ENCODE measurements at regions of chr9 and their contacts with region 1.

Region 1: DNA sequence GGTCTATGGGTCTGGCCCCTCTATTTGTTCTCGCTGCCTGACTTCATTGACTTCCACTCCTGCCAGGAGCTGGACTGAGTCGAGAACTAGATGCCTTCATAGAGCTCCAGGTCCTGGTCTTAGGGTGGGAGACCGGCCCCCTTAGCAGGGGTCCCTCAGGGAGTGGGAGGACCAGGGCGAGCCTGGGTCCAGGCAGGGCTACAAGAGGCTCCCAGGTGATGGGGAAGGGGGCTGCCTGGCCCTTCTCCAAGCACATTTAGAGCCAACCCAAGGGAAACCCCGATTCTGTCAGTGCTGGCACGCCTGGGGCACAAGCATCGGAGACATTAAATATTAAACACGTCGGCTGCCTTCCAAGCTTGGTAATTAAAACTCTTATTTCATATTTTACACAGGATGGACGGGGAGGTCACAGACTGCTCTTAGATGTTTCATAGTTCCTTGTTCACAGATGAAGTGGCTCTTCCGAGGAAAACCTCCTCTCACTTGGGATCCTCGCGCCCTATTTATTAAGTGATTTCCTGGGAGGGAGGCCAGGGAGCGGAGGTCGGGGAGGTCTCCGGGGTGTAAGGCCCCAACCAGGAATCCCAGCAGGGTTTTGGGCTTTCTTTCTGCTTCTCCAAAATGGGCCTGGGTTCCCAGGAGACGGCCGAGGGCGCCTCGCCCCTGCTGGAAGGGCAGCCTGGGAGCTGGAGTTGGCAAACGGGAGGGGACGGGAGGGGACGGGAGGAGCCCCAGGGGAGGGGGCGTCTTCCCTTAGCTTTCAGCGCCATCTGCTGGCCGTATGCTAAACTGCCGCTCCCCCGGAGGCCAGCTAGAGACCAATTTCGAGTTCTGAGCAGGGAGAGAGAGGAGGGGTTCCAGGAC is 23.4 kb upstream of the ZBTB43 start:
- DNase-seq: peak; percentile 93
- H3K4me3 ChIP-seq: no peak overlapping the region; a peak in 1 of 4 replicates
- H3K27ac ChIP-seq: no peak overlapping the region
- H3K4me1 ChIP-seq: peaks cover 0 to 2% of the 10 kb centered on the region in 2 experiments; a peak in 1 of 4 replicates
- H3K27me3 ChIP-seq: peaks cover 12% of the 10 kb centered on the region; the same call in 1 of the 2 replicates
- CTCF ChIP-seq: peak; percentile 93
- EP300 ChIP-seq: no peak
- RAD21 ChIP-seq: peak; percentile 96

Region 2: GRCh38 chr9:126146254-126147145 is 634.9 kb before region 1 on chr9:
- CTCF ChIA-PET with region 1: no interaction called
- POLR2A ChIA-PET with region 1: no interaction called
- DNase-seq: peak; percentile 45
- H3K4me3 ChIP-seq: no peak overlapping the region
- H3K27ac ChIP-seq: no peak overlapping the region
- H3K4me1 ChIP-seq: peaks cover 0 to 16% of the 10 kb centered on the region in 2 experiments; a peak in 1 of 4 replicates
- H3K27me3 ChIP-seq: no peaks in the 10 kb centered on the region; the same call in 1 of the 2 replicates
- CTCF ChIP-seq: peak; percentile 23; the same call in 1 of the 2 replicates
- EP300 ChIP-seq: no peak
- RAD21 ChIP-seq: peak; percentile 23; the same call in 1 of the 2 replicates

Region 3: DNA sequence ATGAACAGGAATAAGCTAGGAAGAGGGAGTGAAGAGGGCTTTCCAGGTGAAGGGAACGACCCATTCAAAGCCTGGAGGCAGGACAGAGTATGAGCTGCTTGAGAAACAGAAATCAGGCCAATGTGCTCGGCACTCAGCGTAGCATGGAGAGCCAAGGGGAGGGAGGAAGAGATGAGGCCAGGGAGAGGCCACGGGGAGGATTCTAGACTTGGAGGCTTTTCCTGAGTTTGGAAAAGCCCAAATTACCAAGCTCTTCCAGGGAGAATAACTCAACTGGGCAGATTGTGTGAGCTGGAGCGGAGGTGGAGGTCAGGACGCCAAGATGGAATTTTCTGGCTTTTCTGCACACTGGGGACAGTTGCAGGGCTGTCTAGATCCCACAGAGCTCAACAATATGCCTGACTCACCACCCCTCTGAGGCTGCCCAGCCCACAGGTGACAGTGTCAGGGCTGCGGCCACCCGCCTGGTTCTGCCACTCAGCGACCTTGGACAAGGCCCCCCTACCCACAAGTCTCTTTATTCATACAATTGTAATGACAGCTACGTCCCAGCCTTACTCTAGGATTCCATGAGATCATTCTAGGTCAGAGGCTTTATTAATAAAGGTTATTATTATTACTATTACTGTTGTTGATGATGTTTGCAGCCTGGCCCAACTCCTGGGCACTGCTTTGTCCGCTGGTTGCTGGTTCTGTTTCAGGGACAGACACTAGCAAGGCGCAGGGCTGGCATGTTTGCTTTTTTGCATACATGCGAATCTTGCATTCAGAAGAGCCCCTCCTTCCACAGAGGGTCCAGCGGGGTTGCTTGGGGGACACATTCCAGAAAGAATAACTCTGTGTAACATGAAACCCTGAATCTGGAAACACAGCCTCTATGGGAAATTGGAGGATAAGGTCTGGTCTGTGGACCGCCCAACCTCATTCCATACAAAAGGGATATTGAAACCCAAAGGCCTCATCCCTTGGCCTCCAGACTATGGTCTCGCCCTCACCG is 177.1 kb before region 1 on chr9:
- CTCF ChIA-PET with region 1: interaction called, 34 read pairs
- POLR2A ChIA-PET with region 1: no interaction called
- DNase-seq: no peak
- H3K4me3 ChIP-seq: no peak overlapping the region
- H3K27ac ChIP-seq: no peak overlapping the region
- H3K4me1 ChIP-seq: no peaks in the 10 kb centered on the region
- H3K27me3 ChIP-seq: peaks cover 41% of the 10 kb centered on the region
- CTCF ChIP-seq: no peak
- EP300 ChIP-seq: no peak
- RAD21 ChIP-seq: no peak

Region 4: GRCh38 chr9:126673689-126674364 is 107.6 kb before region 1 on chr9:
- CTCF ChIA-PET with region 1: interaction called, 10 read pairs
- POLR2A ChIA-PET with region 1: no interaction called
- DNase-seq: peak; percentile 76
- H3K4me3 ChIP-seq: no peak overlapping the region
- H3K27ac ChIP-seq: no peak overlapping the region
- H3K4me1 ChIP-seq: peaks cover 0 to 18% of the 10 kb centered on the region in 2 experiments; a peak in 1 of 4 replicates
- H3K27me3 ChIP-seq: peaks cover 39% of the 10 kb centered on the region
- CTCF ChIP-seq: no peak
- EP300 ChIP-seq: no peak
- RAD21 ChIP-seq: no peak

Region 5: DNA sequence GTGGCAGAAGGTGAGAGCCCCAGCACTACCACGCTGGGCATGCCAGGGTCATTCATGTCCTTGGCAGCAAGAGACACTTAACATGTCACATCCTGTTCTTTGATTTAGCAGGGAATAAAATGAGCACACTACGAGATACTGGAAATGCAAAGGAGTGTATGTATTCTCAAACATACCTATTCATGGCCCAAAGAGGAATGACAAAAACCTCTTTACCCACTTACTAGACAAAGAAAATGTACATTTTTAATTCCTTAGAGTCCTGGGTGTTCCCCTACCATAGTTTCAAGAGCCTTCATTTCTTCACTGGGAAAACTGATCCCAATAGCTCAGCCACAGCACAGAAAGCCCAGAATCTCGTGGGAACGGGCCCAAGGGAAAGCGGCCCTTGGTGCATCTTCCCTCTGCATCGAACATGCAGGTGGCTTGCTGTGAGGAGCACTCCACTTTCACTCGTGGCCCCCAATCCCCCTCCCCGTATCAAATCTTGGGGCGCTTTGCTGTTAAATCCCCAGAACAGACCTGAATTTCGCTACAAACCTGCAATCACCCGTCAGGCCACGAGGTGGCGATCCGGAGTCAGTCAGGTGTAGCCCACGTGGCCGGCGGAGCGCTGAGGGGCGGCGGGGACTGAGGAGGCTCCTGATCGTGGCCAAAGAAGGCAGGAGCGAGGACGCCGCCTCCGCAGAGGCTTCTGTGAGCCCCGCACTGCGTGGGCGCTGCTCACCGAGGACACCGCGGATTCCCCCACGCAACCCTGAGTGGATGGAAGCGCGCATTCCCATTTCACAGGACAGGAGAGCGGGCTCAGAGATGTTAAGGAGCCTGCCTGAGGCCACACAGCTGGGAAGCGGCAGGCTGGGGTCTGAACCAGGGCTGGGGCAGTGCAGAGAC is 76.3 kb before region 1 on chr9:
- CTCF ChIA-PET with region 1: interaction called, 502 read pairs
- POLR2A ChIA-PET with region 1: interaction called, 7 read pairs
- DNase-seq: peak; percentile 93
- H3K4me3 ChIP-seq: peak overlapping the region in 1 of 2 experiments; percentile 34; a peak in 1 of 4 replicates
- H3K27ac ChIP-seq: no peak overlapping the region
- H3K4me1 ChIP-seq: peaks cover 0 to 5% of the 10 kb centered on the region in 2 experiments; a peak in 1 of 4 replicates
- H3K27me3 ChIP-seq: peaks cover 34% of the 10 kb centered on the region; the same call in 1 of the 2 replicates
- CTCF ChIP-seq: peak; percentile 82
- EP300 ChIP-seq: no peak
- RAD21 ChIP-seq: peak; percentile 78

Region 6: DNA sequence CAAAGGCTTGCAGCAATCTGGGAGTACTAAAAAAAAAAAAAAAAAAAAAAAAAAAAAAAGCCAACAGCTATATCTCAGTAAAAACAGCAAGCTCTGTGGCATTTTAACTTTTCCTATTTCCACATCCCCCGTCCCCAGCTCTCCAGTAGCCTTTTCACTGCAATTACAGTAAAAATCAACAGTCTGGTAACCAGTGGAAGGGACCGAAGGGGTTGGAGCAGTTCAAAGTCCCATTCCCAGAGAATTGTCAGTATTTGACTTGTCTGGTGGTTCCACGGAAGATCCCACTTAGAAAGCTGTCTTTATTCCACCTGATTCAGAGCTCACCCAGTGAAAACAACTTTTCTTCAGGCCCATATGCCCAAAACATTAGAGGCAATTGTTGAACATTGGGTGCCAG is 48.4 kb before region 1 on chr9:
- CTCF ChIA-PET with region 1: interaction called, 11 read pairs
- POLR2A ChIA-PET with region 1: no interaction called
- DNase-seq: no peak
- H3K4me3 ChIP-seq: no peak overlapping the region
- H3K27ac ChIP-seq: no peak overlapping the region
- H3K4me1 ChIP-seq: no peaks in the 10 kb centered on the region
- H3K27me3 ChIP-seq: no peaks in the 10 kb centered on the region; the same call in 1 of the 2 replicates
- CTCF ChIP-seq: no peak
- EP300 ChIP-seq: no peak
- RAD21 ChIP-seq: no peak

Region 7: DNA sequence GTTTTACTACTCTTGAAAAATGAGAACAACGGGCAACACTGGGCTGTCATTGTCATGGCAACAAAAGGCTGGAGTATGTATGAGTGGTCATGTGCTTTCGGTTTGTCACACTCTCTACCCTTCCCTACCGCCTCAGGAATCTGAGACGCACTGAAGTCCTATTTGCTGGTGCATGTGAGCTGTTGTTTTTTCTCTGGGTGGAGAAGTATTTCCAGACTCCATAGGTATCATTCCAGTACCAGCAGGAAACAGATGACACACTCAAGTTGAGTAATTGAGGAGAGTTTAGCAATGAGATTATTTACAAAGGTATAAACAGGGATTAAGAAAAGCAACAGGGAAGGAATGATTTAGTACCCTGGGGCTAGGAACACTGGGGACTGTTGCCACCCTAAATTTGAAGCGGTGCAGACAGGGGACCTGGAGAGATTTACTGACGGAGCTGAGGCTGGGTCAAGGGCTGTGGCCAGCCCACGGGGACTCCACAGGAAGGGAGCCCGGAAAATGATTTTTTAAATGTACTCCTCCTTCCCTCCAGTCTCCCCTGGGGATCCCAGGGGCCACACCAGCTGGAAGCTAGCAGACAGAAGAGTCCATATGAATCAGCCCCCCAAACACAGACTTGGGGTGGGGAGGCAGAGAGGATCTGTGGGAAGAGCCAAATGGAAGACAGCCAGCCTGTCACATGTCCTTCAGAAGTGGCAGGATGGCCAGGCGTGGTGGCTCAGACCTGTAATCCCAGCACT is 10.2 kb after region 1 on chr9:
- CTCF ChIA-PET with region 1: interaction called, 17 read pairs
- POLR2A ChIA-PET with region 1: no interaction called
- DNase-seq: no peak
- H3K4me3 ChIP-seq: no peak overlapping the region
- H3K27ac ChIP-seq: no peak overlapping the region
- H3K4me1 ChIP-seq: peaks cover 0 to 2% of the 10 kb centered on the region in 2 experiments; a peak in 1 of 4 replicates
- H3K27me3 ChIP-seq: no peaks in the 10 kb centered on the region
- CTCF ChIP-seq: no peak
- EP300 ChIP-seq: no peak
- RAD21 ChIP-seq: no peak

Region 8: DNA sequence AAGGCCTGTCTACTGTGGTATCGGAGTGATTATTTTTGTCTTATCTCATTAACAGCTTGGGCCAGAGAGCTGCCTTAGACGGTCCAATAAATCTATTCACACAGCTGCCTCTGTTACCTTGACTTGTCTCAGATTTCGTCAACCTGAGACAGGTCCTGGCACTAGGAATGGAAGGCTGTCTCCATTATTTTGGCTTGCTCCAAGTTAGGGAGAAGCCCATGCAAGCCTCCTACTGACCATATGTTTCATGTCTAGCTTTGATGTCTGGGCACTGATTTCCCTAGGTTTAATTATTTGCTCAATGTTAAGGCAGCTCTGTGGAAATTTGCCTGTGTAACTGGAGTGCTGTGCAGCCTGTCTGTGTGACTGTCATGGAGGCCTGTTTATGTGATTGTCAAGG is 120.8 kb after region 1 on chr9:
- CTCF ChIA-PET with region 1: no interaction called
- POLR2A ChIA-PET with region 1: no interaction called
- DNase-seq: no peak
- H3K4me3 ChIP-seq: no peak overlapping the region
- H3K27ac ChIP-seq: no peak overlapping the region
- H3K4me1 ChIP-seq: no peaks in the 10 kb centered on the region
- H3K27me3 ChIP-seq: peaks cover 5% of the 10 kb centered on the region; the same call in 1 of the 2 replicates
- CTCF ChIP-seq: no peak
- EP300 ChIP-seq: no peak
- RAD21 ChIP-seq: no peak